ENCODE measurements at regions of chr12 and their contacts with region 1.

Region 1: GRCh38 chr12:51055060-51055459 is 6.9 kb downstream of the LETMD1 start:
- DNase-seq: no peak
- H3K4me3 ChIP-seq: no peak overlapping the region
- H3K27ac ChIP-seq: no peak overlapping the region
- H3K4me1 ChIP-seq: no peaks in the 10 kb centered on the region
- H3K27me3 ChIP-seq: no peaks in the 10 kb centered on the region
- CTCF ChIP-seq: no peak

Region 2: DNA sequence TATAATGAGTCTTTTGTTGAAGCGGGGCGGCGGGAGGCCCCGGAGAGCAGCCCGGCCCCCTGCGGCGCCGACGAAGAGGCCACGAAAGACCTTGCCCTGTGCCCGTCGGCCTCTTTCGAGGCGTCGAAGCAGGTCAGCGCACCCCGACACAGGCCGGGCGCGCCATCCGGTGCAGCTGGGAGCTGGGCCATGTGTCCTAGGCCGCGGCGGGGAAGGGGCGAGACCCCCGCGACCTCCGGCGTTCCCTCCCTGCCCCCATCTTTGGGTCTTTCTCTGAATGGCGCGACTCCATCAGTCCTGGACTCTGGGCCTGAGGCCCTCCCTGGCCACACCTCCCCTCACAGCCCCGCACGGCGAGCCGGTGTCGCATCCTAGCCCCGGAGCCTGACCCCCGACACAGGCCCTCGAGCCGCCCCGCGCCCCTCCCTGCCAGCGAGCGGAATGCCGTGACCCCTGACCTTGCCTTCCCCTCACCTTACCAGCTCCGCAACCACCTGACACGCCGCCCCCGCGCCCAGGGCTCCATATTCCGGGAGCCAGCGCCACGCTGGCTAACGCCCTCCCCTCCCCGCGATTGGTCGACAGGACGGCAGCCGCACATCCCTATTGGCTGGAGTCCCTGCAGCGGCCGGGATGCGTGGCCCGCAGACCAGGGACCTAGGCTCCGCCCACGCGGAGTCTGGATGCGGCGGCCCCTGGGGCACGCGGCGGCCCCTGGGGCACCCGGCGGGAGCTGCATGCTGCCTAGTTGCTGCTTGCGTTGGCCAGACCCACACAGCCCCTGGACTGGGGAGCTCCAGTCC is 29.0 kb before region 1 on chr12 and contains the start of gene SLC11A2:
- CTCF ChIA-PET with region 1: interaction called, 10 read pairs
- POLR2A ChIA-PET with region 1: no interaction called
- intact Hi-C with region 1: no loop called
- DNase-seq: peak; percentile 97
- H3K4me3 ChIP-seq: peak within 1 kb of the TSS; percentile 92
- H3K27ac ChIP-seq: peak within 1 kb of the TSS; percentile 74
- H3K4me1 ChIP-seq: peaks cover 8% of the 10 kb centered on the region
- H3K27me3 ChIP-seq: no peaks in the 10 kb centered on the region
- CTCF ChIP-seq: no peak
- total RNA-seq, gene SLC11A2: 33.9 and 47.6 TPM in 2 replicates

Measured in A673 (cell line).